Activated naive CD4-positive, alpha-beta T cell treated with anti-CD3 and anti-CD28 coated beads for 36 hours (primary cell): ENCODE measurements at regions of chr12 and their contacts with region 1.

Region 1: GRCh38 chr12:32139064-32139421 is 32.4 kb downstream of the BICD1 start:
- DNase-seq: peak; percentile 74
- H3K4me3 Mint-ChIP-seq: peak overlapping the region; percentile 71
- H3K27ac Mint-ChIP-seq: no peak overlapping the region
- H3K4me1 Mint-ChIP-seq: peaks cover 24% of the 10 kb centered on the region
- H3K27me3 Mint-ChIP-seq: peaks cover 2% of the 10 kb centered on the region

Region 2: GRCh38 chr12:31317471-31318395 is 821.3 kb before region 1 on chr12:
- CTCF ChIA-PET with region 1: no interaction called
- intact Hi-C with region 1: loop called (anchors 1 kb)
- DNase-seq: no peak
- H3K4me3 Mint-ChIP-seq: peak overlapping the region; percentile 74
- H3K27ac Mint-ChIP-seq: peak overlapping the region; percentile 99
- H3K4me1 Mint-ChIP-seq: peaks cover 73% of the 10 kb centered on the region
- H3K27me3 Mint-ChIP-seq: no peaks in the 10 kb centered on the region

Region 3: DNA sequence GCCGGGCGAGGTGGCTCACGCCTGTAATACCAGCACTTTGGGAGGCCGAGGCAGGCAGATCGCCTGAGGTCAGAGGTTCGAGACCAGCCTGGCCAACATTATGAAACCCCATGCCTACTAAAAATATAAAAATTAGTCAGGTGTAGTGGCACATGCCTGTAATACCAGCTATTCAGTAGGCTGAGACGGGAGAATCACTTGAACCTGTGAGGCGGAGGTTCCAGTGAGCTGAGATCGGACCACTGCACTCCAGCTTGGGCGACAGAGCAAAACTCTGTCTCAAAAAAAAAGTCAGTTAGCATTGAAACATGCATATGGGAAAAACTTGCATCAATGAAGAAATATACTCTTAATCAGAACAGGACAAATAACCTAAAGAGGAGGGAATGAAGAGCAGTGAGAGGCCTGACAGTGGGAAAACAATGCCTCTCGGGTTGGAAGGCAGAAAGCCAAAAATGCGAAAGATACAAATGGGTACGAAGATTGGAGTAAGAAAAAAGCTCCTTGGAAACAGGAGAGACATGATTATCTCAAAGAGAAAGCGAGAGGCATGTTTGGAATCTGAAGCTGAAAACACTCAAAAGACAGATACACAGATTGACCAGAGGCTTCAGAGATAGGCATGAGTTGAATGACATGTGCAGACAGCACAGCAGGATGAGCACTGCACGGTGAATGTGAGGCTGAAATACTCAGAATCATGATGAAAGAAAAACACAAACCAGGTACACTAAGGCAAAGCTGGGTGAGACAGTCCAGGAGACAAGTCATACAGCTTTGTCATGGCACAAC is 149.3 kb before region 1 on chr12:
- CTCF ChIA-PET with region 1: no interaction called
- intact Hi-C with region 1: loop called (anchors 1 kb)
- DNase-seq: no peak
- H3K4me3 Mint-ChIP-seq: no peak overlapping the region
- H3K27ac Mint-ChIP-seq: peak overlapping the region; percentile 87
- H3K4me1 Mint-ChIP-seq: peaks cover 55% of the 10 kb centered on the region
- H3K27me3 Mint-ChIP-seq: no peaks in the 10 kb centered on the region

Region 4: DNA sequence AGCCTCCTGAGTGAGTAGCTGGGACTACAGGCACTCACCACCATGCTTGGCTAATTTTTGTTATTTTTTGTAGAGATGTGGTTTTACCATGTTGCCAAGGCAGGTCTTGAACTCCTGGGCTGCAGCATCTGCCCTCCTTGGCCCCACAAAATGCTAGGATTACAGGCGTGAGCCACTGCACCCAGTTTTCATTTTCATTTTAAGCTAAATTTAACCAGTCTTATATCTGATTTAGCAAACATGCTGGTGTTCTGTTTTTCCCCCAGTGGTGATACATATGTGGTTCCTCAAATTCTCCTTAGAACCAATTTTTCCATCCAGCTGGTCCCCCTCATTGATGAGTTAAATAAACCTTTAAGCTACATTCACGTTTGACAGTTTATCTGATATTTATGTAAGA is 76.2 kb before region 1 on chr12:
- CTCF ChIA-PET with region 1: no interaction called
- intact Hi-C with region 1: loop called (anchors 1 kb)
- DNase-seq: no peak
- H3K4me3 Mint-ChIP-seq: no peak overlapping the region
- H3K27ac Mint-ChIP-seq: no peak overlapping the region
- H3K4me1 Mint-ChIP-seq: peaks cover 11% of the 10 kb centered on the region
- H3K27me3 Mint-ChIP-seq: no peaks in the 10 kb centered on the region

Region 5: GRCh38 chr12:32076941-32077340 is 62.1 kb before region 1 on chr12:
- CTCF ChIA-PET with region 1: no interaction called
- intact Hi-C with region 1: no loop called
- DNase-seq: no peak
- H3K4me3 Mint-ChIP-seq: no peak overlapping the region
- H3K27ac Mint-ChIP-seq: no peak overlapping the region
- H3K4me1 Mint-ChIP-seq: no peaks in the 10 kb centered on the region
- H3K27me3 Mint-ChIP-seq: no peaks in the 10 kb centered on the region

Region 6: GRCh38 chr12:32198555-32198954 is 59.5 kb after region 1 on chr12:
- CTCF ChIA-PET with region 1: no interaction called
- intact Hi-C with region 1: loop called (anchors 1 kb)
- DNase-seq: peak; percentile 12
- H3K4me3 Mint-ChIP-seq: no peak overlapping the region
- H3K27ac Mint-ChIP-seq: no peak overlapping the region
- H3K4me1 Mint-ChIP-seq: peaks cover 5% of the 10 kb centered on the region
- H3K27me3 Mint-ChIP-seq: no peaks in the 10 kb centered on the region

Region 7: DNA sequence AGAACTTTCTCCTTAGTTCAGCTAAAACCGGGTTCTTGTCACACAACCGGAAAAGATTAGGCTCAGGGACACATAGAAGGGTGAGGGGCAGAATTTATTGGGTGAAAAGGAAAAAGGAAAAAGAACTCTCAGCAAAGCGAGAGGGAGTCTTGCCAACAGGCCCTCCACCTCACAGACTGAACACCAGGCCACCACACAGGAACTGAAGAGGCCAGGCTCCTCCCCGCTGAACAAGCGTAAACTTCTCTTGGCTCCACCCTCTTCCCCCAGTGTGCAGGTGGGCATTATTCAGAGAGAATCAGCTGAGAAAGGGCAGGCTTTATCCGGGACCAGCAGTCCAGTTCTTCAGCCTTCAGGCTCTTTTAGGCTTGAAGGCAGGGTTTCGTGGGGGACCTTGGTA is 134.7 kb after region 1 on chr12:
- CTCF ChIA-PET with region 1: no interaction called
- intact Hi-C with region 1: loop called (anchors 1 kb)
- DNase-seq: peak; percentile 70
- H3K4me3 Mint-ChIP-seq: peak overlapping the region; percentile 58
- H3K27ac Mint-ChIP-seq: peak overlapping the region; percentile 91
- H3K4me1 Mint-ChIP-seq: peaks cover 19% of the 10 kb centered on the region
- H3K27me3 Mint-ChIP-seq: no peaks in the 10 kb centered on the region